Sciatic nerve (tissue), 2 donors: ENCODE measurements at regions of chr7 and their contacts with region 1.

Region 1: GRCh38 chr7:29401769-29402168 is 161.9 kb upstream of the PRR15 start:
- DNase-seq: no peak
- ATAC-seq: no peak

Region 2: GRCh38 chr7:28933846-28934320 is 467.9 kb before region 1 on chr7:
- intact Hi-C with region 1: loop called (anchors 1 kb)
- DNase-seq: no peak
- ATAC-seq: no peak

Region 3: GRCh38 chr7:29363656-29364405 is 37.9 kb before region 1 on chr7:
- intact Hi-C with region 1: loop called (anchors 2 kb)
- DNase-seq: no peak
- ATAC-seq: no peak

Region 4: GRCh38 chr7:29442146-29442545 is 40.4 kb after region 1 on chr7:
- intact Hi-C with region 1: no loop called
- DNase-seq: no peak
- ATAC-seq: no peak